ENCODE measurements at regions of chr18 and their contacts with region 1.

Region 1: GRCh38 chr18:261398-262073 is 6.3 kb downstream of the THOC1 start:
- DNase-seq: no peak
- H3K4me3 Mint-ChIP-seq: no peak overlapping the region
- H3K27ac Mint-ChIP-seq: no peak overlapping the region
- H3K4me1 Mint-ChIP-seq: peaks cover 8% of the 10 kb centered on the region
- H3K27me3 Mint-ChIP-seq: no peaks in the 10 kb centered on the region

Region 2: DNA sequence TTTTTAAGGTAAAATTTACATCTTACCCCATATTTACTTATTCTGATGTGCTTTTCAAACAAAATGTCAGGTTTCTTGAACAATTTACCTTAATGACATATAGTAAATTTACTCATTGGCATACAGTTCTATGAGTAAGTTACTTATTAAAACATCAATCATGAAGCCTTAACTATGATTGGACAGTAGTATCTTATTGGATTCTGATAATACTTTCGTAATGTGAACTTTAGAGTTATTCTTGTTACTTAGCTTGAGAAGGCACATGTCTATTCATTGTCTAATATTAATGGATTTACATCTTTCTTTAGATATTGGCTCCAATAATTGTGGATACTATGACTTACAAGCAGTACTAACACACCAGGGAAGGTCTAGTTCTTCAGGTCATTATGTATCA is 51.5 kb before region 1 on chr18:
- intact Hi-C with region 1: no loop called
- DNase-seq: no peak
- H3K4me3 Mint-ChIP-seq: no peak overlapping the region
- H3K27ac Mint-ChIP-seq: no peak overlapping the region
- H3K4me1 Mint-ChIP-seq: peaks cover 10% of the 10 kb centered on the region
- H3K27me3 Mint-ChIP-seq: no peaks in the 10 kb centered on the region

Region 3: DNA sequence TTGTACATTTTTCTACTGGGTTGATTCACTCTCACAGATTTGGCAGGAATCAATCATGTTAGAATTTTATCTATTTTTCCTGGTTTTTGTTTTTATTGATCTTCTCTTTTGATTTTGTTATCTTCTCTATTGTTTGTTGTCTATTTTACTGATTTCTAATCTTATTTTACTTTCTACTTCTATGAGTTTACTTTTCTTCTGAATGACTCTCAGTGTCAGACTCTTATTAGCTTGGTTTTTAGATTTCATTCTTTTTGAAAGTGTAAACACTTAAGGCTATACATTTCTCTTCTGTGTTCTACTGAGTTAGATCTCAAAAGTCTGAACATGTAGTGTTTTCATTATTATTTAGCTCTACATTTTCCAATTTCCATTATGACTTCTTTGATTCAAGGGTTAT is 40.8 kb before region 1 on chr18:
- intact Hi-C with region 1: loop called (anchors 5 kb)
- DNase-seq: no peak
- H3K4me3 Mint-ChIP-seq: no peak overlapping the region
- H3K27ac Mint-ChIP-seq: peak overlapping the region; percentile 5
- H3K4me1 Mint-ChIP-seq: no peaks in the 10 kb centered on the region
- H3K27me3 Mint-ChIP-seq: peaks cover 1% of the 10 kb centered on the region